ENCODE measurements at regions of chr12 and their contacts with region 1.

Region 1: DNA sequence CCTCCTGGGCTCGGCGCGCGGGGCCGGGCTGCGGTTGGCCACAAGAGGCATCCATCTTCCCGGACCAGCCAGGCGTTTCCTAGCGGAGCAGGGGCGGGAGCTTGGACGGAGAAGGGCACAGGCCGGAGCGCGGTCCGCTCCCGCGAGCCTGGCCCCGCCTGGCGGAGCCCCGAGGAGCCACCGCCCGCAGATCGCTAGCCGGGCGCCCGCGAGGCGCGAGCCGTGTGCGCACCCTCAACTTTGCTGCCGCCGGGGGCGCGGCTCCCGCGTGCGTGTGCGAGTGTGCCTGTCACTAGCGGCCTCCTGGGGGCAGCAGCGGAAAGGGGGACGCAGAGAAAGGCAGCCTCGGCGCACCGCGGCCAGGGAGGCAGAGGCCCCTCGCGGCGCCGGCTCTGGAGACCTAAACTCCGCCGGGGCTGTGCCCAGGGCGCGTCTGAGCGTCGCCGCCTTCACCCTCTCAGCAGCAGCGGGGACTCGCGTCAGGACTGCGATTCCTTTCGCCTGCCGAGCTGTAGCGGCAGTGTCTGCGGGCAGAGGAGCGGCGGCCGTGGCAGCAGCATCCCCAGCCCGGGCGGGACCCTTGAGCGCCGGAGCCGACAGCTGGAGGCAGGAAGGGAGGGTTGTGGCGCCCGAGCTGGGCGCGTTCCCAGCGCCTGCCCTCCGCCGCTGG is 644 bp upstream of the SRGAP1 start:
- DNase-seq: peak; percentile 93
- H3K4me3 ChIP-seq: peak overlapping the region; percentile 82 to 90
- H3K27ac ChIP-seq: peak overlapping the region; percentile 79 to 92
- H3K4me1 ChIP-seq: peaks cover 7 to 15% of the 10 kb centered on the region in 2 experiments; a peak in 3 of 4 replicates
- H3K27me3 ChIP-seq: no peaks in the 10 kb centered on the region
- CTCF ChIP-seq: peak; percentile 79
- EP300 ChIP-seq: 0 out of 4 replicates have a peak, but pooled peaks of 1 of the 2 experiments have one; percentile 4
- RAD21 ChIP-seq: peak; percentile 96

Region 2: DNA sequence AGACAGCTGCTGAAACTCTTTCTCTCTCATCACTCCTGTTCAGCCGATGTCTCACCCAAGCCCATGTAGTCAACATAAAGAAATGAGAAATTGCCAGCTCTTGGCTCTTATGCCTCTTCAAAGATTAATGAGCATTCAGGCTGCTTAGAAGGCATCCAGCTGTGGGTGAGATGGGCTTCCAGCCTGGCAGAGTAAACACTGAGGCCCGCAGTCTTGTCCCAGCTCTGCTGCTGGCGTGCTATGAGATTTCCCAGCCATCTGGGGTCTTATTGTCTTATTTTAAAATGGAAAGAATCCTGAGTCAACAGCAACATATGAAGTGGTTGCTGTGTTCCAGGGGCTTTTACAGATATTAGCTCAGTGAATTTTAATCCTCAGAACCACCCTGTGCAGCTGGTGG is 51.5 kb before region 1 on chr12:
- CTCF ChIA-PET with region 1: no interaction called
- POLR2A ChIA-PET with region 1: no interaction called
- DNase-seq: no peak
- H3K4me3 ChIP-seq: no peak overlapping the region
- H3K27ac ChIP-seq: no peak overlapping the region
- H3K4me1 ChIP-seq: 0 out of 4 replicates have a peak, but pooled peaks cover 0 to 3% of the 10 kb centered on the region in 2 experiments
- H3K27me3 ChIP-seq: no peaks in the 10 kb centered on the region
- CTCF ChIP-seq: no peak
- EP300 ChIP-seq: no peak
- RAD21 ChIP-seq: no peak

Region 3: DNA sequence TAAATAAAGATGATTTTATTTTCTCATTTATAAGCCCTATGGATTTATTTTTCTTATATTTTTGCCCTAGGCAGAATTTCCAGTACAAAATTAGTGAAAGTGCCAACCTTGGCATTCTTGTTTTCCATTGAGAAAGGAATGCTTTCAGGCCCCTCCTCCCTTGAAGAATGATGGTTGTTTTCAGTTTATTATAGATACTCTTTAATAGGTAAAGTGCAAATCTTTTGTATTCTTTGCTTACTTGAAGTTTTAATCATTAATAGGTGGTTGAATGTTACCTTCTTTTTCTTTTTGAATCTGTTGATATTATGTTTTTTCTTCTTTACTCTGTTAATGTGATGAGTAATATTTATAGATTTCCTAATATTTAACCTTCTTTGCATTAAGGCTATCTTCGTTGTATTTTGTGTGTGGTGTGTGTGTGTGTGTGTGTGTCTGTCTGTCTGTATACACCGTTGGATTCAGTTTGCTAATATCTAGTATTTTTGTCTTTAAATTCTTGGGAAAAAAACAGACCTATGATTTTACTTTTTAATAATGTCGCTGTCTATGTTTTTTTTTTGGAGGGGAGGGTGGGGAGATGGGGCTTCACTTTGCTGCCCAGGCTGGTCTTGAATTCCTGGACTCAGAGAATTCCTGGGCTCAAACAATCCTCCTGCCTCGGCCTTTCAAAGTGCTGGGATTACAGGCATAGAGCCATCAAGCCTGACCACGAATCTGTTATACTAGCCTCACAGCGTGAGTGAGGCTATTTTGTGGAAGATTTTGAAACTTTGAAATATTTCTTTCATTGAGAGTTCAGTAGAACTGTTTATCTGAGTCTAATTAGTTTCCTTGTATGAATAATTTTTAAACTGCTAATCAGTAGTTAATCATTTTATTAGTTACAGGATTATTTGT is 14.2 kb after region 1 on chr12:
- CTCF ChIA-PET with region 1: interaction called, 27 read pairs
- POLR2A ChIA-PET with region 1: no interaction called
- DNase-seq: no peak
- H3K4me3 ChIP-seq: no peak overlapping the region
- H3K27ac ChIP-seq: no peak overlapping the region
- H3K4me1 ChIP-seq: peaks cover 3 to 16% of the 10 kb centered on the region in 2 experiments; a peak in 3 of 4 replicates
- H3K27me3 ChIP-seq: no peaks in the 10 kb centered on the region
- CTCF ChIP-seq: no peak
- EP300 ChIP-seq: no peak
- RAD21 ChIP-seq: no peak

Region 4: DNA sequence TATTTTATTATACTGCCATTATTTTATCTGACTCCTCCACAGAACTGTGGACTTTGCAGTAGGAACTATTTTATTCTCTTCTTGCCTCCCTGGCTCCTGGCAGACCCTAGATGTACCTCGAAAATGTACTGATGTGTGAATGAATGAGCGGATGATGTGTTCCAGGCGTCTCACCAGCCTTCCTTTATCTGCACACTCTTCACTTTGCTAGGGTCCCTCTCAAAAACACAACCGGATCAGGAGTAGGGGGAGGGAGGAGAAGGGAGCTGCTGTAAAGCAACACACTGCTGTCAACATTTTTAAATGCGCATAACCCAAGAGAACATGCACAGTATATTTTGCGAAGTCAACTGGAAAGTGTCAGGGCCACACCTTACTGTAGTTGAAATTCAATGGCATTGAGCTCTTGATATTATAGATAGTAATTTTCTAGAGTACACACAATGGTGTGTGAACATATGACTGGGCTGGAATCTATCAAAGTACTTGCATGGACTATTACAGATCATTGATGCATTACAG is 36.9 kb after region 1 on chr12:
- CTCF ChIA-PET with region 1: no interaction called
- POLR2A ChIA-PET with region 1: no interaction called
- DNase-seq: no peak
- H3K4me3 ChIP-seq: no peak overlapping the region
- H3K27ac ChIP-seq: no peak overlapping the region
- H3K4me1 ChIP-seq: peaks cover 0 to 8% of the 10 kb centered on the region in 2 experiments; a peak in 2 of 4 replicates
- H3K27me3 ChIP-seq: no peaks in the 10 kb centered on the region
- CTCF ChIP-seq: no peak
- EP300 ChIP-seq: no peak
- RAD21 ChIP-seq: no peak

Region 5: DNA sequence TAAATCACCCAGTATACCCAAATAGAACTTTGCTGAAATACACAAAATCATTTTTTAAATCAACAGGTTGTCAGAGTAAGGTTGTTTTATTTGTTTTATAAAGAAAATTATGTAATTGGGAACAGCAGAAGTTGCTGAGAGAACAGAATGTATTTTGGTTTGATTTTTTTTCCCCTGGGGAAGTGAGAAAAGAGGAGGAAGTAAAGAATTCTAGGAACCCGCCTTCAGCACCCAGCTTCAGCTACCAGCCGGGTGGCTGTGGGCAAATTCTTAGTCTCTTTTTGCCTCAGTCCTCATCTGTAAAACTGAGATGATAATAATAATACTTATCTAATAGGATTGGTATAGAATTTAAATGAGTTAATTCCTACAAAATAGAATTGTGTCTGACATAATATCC is 120.0 kb after region 1 on chr12:
- CTCF ChIA-PET with region 1: interaction called, 16 read pairs
- POLR2A ChIA-PET with region 1: no interaction called
- DNase-seq: no peak
- H3K4me3 ChIP-seq: no peak overlapping the region
- H3K27ac ChIP-seq: no peak overlapping the region
- H3K4me1 ChIP-seq: peaks cover 26 to 34% of the 10 kb centered on the region in 2 experiments; a peak in 3 of 4 replicates
- H3K27me3 ChIP-seq: no peaks in the 10 kb centered on the region
- CTCF ChIP-seq: no peak
- EP300 ChIP-seq: no peak
- RAD21 ChIP-seq: no peak

Region 6: GRCh38 chr12:64088431-64089349 is 244.8 kb after region 1 on chr12:
- CTCF ChIA-PET with region 1: interaction called, 41 read pairs
- POLR2A ChIA-PET with region 1: no interaction called
- DNase-seq: peak; percentile 37
- H3K4me3 ChIP-seq: peak overlapping the region; percentile 12 to 42; a peak in 2 of 4 replicates
- H3K27ac ChIP-seq: peak overlapping the region; percentile 87 to 89
- H3K4me1 ChIP-seq: peaks cover 41 to 47% of the 10 kb centered on the region in 2 experiments
- H3K27me3 ChIP-seq: no peaks in the 10 kb centered on the region
- CTCF ChIP-seq: no peak
- EP300 ChIP-seq: peak; percentile 56 to 57; a peak in 3 of 4 replicates
- RAD21 ChIP-seq: 0 out of 2 replicates have a peak, but pooled peaks have one; percentile 12

Region 7: DNA sequence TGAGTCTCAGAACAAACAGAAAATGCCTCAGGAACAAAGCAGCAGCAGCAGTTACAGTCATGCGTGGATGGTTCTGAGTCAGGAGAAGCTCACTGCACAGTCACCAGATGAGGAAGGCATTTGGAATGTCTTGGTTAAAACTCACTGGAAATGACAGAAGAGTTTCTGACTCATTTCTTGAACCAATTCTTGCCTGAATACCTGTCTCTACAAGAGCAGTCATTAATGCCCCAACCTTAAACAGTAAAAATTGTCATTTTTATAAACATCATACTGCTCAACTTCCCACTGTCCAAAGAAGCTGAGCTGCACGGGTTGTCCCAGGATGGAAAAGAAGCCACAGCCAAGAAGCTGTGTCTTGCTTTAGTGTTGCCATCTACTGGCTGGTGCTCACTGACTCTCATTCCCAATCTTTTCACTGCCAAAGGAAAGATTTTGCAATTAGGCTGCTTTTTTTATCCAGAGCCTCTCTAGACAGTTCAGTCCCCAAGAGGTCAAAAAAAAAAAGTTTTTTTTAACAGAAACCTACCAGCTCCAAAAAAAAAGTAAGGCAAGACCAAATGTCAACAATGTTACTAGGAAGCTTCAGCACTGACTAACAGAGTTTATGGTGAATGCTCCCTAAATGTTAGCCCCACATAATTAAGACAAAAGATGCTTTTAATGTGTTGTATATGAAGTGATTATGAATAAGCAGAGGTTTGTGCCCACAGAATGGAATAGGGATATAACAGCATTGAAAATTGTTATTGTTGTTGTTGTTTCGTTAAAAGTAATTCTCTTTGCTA is 337.8 kb after region 1 on chr12:
- CTCF ChIA-PET with region 1: interaction called, 71 read pairs
- POLR2A ChIA-PET with region 1: interaction called, 13 read pairs
- DNase-seq: peak; percentile 50
- H3K4me3 ChIP-seq: peak overlapping the region in 1 of 2 experiments; percentile 42; a peak in 3 of 4 replicates
- H3K27ac ChIP-seq: peak overlapping the region; percentile 78 to 98; a peak in 3 of 4 replicates
- H3K4me1 ChIP-seq: peaks cover 5 to 30% of the 10 kb centered on the region in 2 experiments
- H3K27me3 ChIP-seq: no peaks in the 10 kb centered on the region
- CTCF ChIP-seq: peak; percentile 70
- EP300 ChIP-seq: peak in 1 of 2 experiments; percentile 92; a peak in 2 of 4 replicates
- RAD21 ChIP-seq: peak; percentile 93

Region 8: GRCh38 chr12:64236549-64236948 is 392.7 kb after region 1 on chr12:
- CTCF ChIA-PET with region 1: interaction called, 31 read pairs
- POLR2A ChIA-PET with region 1: interaction called, 3 read pairs
- DNase-seq: peak; percentile 7
- H3K4me3 ChIP-seq: no peak overlapping the region
- H3K27ac ChIP-seq: no peak overlapping the region
- H3K4me1 ChIP-seq: peaks cover 0 to 5% of the 10 kb centered on the region in 2 experiments; a peak in 2 of 4 replicates
- H3K27me3 ChIP-seq: no peaks in the 10 kb centered on the region
- CTCF ChIP-seq: peak; percentile 39
- EP300 ChIP-seq: no peak
- RAD21 ChIP-seq: peak; percentile 65

Measured in SK-N-SH (cell line).